ENCODE measurements at regions of chr2 and their contacts with region 1.

Region 1: GRCh38 chr2:202577250-202578183 is 57.3 kb upstream of the FAM117B start:
- DNase-seq: no peak
- ATAC-seq: no peak
- H3K4me3 ChIP-seq: no peak overlapping the region
- H3K4me3 Mint-ChIP-seq: no peak overlapping the region
- H3K27ac ChIP-seq: no peak overlapping the region
- H3K27ac Mint-ChIP-seq: no peak overlapping the region
- H3K4me1 ChIP-seq: no peaks in the 10 kb centered on the region
- H3K4me1 Mint-ChIP-seq: no peaks in the 10 kb centered on the region
- H3K27me3 ChIP-seq: no peaks in the 10 kb centered on the region
- H3K27me3 Mint-ChIP-seq: no peaks in the 10 kb centered on the region
- CTCF ChIP-seq: no peak

Region 2: GRCh38 chr2:202290970-202291369 is 286.5 kb before region 1 on chr2:
- CTCF ChIA-PET with region 1: no interaction called
- POLR2A ChIA-PET with region 1: no interaction called
- intact Hi-C with region 1: no loop called
- DNase-seq: no peak
- ATAC-seq: no peak
- H3K4me3 ChIP-seq: no peak overlapping the region
- H3K4me3 Mint-ChIP-seq: no peak overlapping the region
- H3K27ac ChIP-seq: no peak overlapping the region
- H3K27ac Mint-ChIP-seq: no peak overlapping the region
- H3K4me1 ChIP-seq: no peaks in the 10 kb centered on the region
- H3K4me1 Mint-ChIP-seq: no peaks in the 10 kb centered on the region
- H3K27me3 ChIP-seq: no peaks in the 10 kb centered on the region
- H3K27me3 Mint-ChIP-seq: no peaks in the 10 kb centered on the region
- CTCF ChIP-seq: no peak

Region 3: DNA sequence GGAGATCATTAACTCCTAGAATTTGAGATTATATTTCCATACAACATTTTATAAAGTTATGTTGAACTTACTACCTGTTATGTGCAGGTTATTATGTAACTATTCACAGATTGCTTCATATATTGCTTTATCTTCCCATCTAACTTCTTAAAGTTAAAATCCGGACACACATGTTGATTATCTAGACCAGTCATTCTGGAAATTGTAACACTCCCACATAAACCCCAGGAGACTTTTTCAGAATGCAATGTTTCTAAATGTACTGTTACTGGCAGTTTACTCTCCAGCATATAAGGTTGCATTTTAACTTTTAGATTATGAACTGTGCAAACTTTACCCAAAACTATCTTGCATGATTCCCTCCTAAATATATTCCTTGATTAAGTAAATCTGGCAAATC is 13.3 kb before region 1 on chr2:
- CTCF ChIA-PET with region 1: no interaction called
- POLR2A ChIA-PET with region 1: no interaction called
- intact Hi-C with region 1: no loop called
- DNase-seq: no peak
- ATAC-seq: no peak
- H3K4me3 ChIP-seq: no peak overlapping the region
- H3K4me3 Mint-ChIP-seq: no peak overlapping the region
- H3K27ac ChIP-seq: no peak overlapping the region
- H3K27ac Mint-ChIP-seq: no peak overlapping the region
- H3K4me1 ChIP-seq: no peaks in the 10 kb centered on the region
- H3K4me1 Mint-ChIP-seq: no peaks in the 10 kb centered on the region
- H3K27me3 ChIP-seq: no peaks in the 10 kb centered on the region
- H3K27me3 Mint-ChIP-seq: no peaks in the 10 kb centered on the region
- CTCF ChIP-seq: no peak

Region 4: GRCh38 chr2:202652119-202652518 is 74.6 kb after region 1 on chr2:
- CTCF ChIA-PET with region 1: no interaction called
- POLR2A ChIA-PET with region 1: no interaction called
- intact Hi-C with region 1: no loop called
- DNase-seq: no peak
- ATAC-seq: no peak
- H3K4me3 ChIP-seq: no peak overlapping the region
- H3K4me3 Mint-ChIP-seq: no peak overlapping the region
- H3K27ac ChIP-seq: peak overlapping the region; percentile 24 to 61
- H3K27ac Mint-ChIP-seq: peak overlapping the region; percentile 69
- H3K4me1 ChIP-seq: peaks cover 55 to 72% of the 10 kb centered on the region in 2 donors
- H3K4me1 Mint-ChIP-seq: peaks cover 74% of the 10 kb centered on the region
- H3K27me3 ChIP-seq: no peaks in the 10 kb centered on the region
- H3K27me3 Mint-ChIP-seq: no peaks in the 10 kb centered on the region
- CTCF ChIP-seq: no peak

Region 5: GRCh38 chr2:202703091-202703490 is 125.6 kb after region 1 on chr2:
- CTCF ChIA-PET with region 1: interaction called, 16 read pairs
- POLR2A ChIA-PET with region 1: no interaction called
- intact Hi-C with region 1: loop called (anchors 5 kb)
- DNase-seq: no peak
- ATAC-seq: no peak
- H3K4me3 ChIP-seq: no peak overlapping the region
- H3K4me3 Mint-ChIP-seq: no peak overlapping the region
- H3K27ac ChIP-seq: peak overlapping the region in 1 of 2 donors; percentile 12
- H3K27ac Mint-ChIP-seq: peak overlapping the region; percentile 3
- H3K4me1 ChIP-seq: peaks cover 13 to 26% of the 10 kb centered on the region in 2 donors
- H3K4me1 Mint-ChIP-seq: peaks cover 55% of the 10 kb centered on the region
- H3K27me3 ChIP-seq: no peaks in the 10 kb centered on the region
- H3K27me3 Mint-ChIP-seq: no peaks in the 10 kb centered on the region
- CTCF ChIP-seq: no peak

Region 6: GRCh38 chr2:203155406-203155805 is 577.9 kb after region 1 on chr2:
- CTCF ChIA-PET with region 1: interaction called, 3 read pairs
- POLR2A ChIA-PET with region 1: no interaction called
- intact Hi-C with region 1: loop called (anchors 5 kb)
- DNase-seq: peak; percentile 1
- ATAC-seq: no peak
- H3K4me3 ChIP-seq: no peak overlapping the region
- H3K4me3 Mint-ChIP-seq: no peak overlapping the region
- H3K27ac ChIP-seq: no peak overlapping the region
- H3K27ac Mint-ChIP-seq: no peak overlapping the region
- H3K4me1 ChIP-seq: no peaks in the 10 kb centered on the region
- H3K4me1 Mint-ChIP-seq: peaks cover 5% of the 10 kb centered on the region
- H3K27me3 ChIP-seq: no peaks in the 10 kb centered on the region
- H3K27me3 Mint-ChIP-seq: no peaks in the 10 kb centered on the region
- CTCF ChIP-seq: no peak

Region 7: DNA sequence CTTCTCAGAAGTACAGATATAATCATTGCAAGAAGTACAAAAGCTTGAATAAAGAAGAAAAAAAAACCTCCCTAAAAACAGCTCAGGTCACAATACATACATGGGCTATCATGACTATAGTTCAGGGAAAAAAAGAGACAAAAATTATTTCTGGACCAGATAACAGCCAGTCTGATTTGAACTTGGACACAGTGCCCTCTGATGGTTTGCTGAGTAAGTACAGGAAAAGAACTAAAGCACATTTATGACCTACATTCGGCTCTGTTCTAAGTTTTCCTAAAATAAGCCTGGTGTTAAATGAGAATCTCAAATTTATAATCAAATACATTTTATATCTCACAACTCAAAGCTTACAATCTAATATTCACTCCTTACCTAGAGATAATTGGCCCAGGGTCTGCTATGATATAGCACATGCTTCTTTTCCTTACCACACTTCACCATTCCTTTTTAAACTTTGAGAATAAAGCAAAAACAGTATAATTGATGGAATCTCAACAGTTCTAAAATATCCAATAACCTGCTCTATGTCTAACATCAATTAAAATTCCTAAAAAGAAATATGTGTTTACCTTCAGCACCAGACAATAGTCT is 876.4 kb after region 1 on chr2:
- CTCF ChIA-PET with region 1: interaction called, 3 read pairs
- POLR2A ChIA-PET with region 1: no interaction called
- intact Hi-C with region 1: loop called (anchors 1 kb)
- DNase-seq: peak; percentile 46
- ATAC-seq: no peak
- H3K4me3 ChIP-seq: no peak overlapping the region
- H3K4me3 Mint-ChIP-seq: no peak overlapping the region
- H3K27ac ChIP-seq: no peak overlapping the region
- H3K27ac Mint-ChIP-seq: no peak overlapping the region
- H3K4me1 ChIP-seq: no peaks in the 10 kb centered on the region
- H3K4me1 Mint-ChIP-seq: no peaks in the 10 kb centered on the region
- H3K27me3 ChIP-seq: no peaks in the 10 kb centered on the region
- H3K27me3 Mint-ChIP-seq: no peaks in the 10 kb centered on the region
- CTCF ChIP-seq: peak; percentile 84

Region 8: GRCh38 chr2:203814661-203815540 is 1237.4 kb after region 1 on chr2:
- CTCF ChIA-PET with region 1: no interaction called
- POLR2A ChIA-PET with region 1: no interaction called
- intact Hi-C with region 1: loop called (anchors 10 kb)
- DNase-seq: peak; percentile 53
- ATAC-seq: peak; percentile 54
- H3K4me3 ChIP-seq: no peak overlapping the region
- H3K4me3 Mint-ChIP-seq: no peak overlapping the region
- H3K27ac ChIP-seq: no peak overlapping the region
- H3K27ac Mint-ChIP-seq: no peak overlapping the region
- H3K4me1 ChIP-seq: peaks cover 0 to 4% of the 10 kb centered on the region in 2 donors
- H3K4me1 Mint-ChIP-seq: peaks cover 4% of the 10 kb centered on the region
- H3K27me3 ChIP-seq: peaks cover 0 to 54% (median 44%) of the 10 kb centered on the region in 4 experiments
- H3K27me3 Mint-ChIP-seq: peaks cover 72% of the 10 kb centered on the region
- CTCF ChIP-seq: peak; percentile 63

Measured in B cell (primary cell).